ENCODE measurements at regions of chr16 and their contacts with region 1.

Region 1: GRCh38 chr16:87017365-87018012 is 299.7 kb downstream of the C16orf95 start:
- DNase-seq: peak; percentile 56 to 84
- ATAC-seq: peak; percentile 84 to 93
- H3K4me3 ChIP-seq: no peak overlapping the region
- H3K27ac ChIP-seq: peak overlapping the region in 1 of 2 experiments; percentile 49; a peak in 2 of 6 replicates
- H3K4me1 ChIP-seq: peaks cover 3% of the 10 kb centered on the region; the same call in 1 of the 3 replicates
- CTCF ChIP-seq: peak; percentile 42
- EP300 ChIP-seq: no peak
- POLR2A ChIP-seq: no peak
- RAD21 ChIP-seq: peak; percentile 48 to 59

Region 2: DNA sequence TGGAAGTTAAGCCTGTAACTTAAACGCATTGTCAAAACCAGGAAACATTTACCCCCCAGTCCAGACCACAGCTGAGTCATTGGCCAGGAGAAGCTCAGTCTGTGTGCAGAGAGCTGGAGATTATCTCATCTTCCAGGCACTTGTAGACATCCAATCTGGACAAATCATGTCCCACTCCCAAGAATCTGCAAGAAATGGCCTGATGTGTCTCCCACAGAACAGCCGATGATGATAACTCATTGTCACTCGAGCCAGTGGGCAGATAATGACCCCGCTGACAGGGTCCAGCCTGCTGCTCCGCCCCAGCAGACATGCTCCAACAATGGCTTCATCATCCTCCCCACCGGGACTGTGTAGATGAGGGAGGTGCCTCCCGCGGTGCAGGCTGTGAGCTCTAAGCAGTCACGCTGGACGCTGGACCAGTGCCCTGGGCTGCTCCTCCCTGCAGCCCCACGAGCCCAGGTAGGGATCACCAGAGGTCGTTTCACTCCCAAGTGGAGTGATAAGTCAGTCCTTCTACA is 22.8 kb before region 1 on chr16:
- CTCF ChIA-PET with region 1: interaction called, 13 read pairs
- POLR2A ChIA-PET with region 1: no interaction called
- DNase-seq: peak; percentile 75 to 89
- ATAC-seq: peak; percentile 80 to 90
- H3K4me3 ChIP-seq: 0 out of 3 replicates have a peak overlapping the region, but pooled peaks have one; percentile 11
- H3K27ac ChIP-seq: peak overlapping the region; percentile 79
- H3K4me1 ChIP-seq: peaks cover 36% of the 10 kb centered on the region
- CTCF ChIP-seq: no peak
- EP300 ChIP-seq: no peak
- POLR2A ChIP-seq: no peak
- RAD21 ChIP-seq: no peak

Region 3: DNA sequence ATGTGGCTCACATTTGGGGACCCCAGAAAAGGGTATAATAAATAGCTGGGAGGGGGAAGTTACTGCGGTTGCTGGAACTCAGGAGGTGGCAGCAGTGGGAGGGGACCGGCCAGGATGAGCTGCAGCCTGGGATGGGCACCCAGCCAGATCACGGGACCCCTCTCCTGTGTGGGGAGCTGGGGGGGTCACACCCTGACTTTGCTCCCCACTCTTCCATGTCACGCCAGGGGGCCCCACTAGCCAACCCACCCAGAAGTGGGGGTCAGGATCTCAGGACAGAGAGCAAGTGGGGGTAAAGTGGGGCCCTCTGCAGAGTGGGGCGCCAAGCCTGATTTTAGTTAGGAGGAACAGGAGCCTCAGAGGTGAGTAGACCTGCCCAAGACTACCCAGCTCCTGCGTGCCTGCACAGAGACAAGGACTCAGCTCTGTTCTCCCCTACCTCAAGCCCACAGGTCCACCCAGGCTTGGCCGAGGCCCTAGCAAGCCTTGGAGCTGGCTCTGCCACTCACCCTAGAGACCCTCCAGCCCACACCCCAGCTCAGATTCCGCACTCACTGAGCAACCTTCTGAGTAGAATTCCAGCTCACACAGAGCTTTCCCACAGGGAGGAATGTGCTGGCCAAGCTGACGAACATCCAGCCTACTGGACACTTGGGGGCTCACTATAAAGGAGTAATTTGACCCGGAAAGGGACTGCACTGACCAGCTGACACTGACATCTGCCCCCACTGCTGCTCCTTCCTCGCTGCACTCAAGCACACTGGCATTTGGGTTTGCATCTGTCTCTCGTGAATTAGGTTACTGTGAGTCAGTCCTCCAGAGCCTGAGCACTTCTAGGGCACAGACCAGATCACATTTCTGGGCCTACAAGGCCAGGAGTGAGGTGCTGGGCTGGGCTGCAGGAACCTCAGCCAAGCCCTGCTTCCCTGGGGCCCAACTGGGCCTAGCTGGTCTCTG is 10.4 kb before region 1 on chr16:
- CTCF ChIA-PET with region 1: interaction called, 12 read pairs
- POLR2A ChIA-PET with region 1: no interaction called
- DNase-seq: no peak
- ATAC-seq: no peak
- H3K4me3 ChIP-seq: no peak overlapping the region
- H3K27ac ChIP-seq: no peak overlapping the region
- H3K4me1 ChIP-seq: no peaks in the 10 kb centered on the region
- CTCF ChIP-seq: no peak
- EP300 ChIP-seq: no peak
- POLR2A ChIP-seq: no peak
- RAD21 ChIP-seq: no peak